GM12878 (cell line): ENCODE measurements at regions of chr6 and their contacts with region 1.

Region 1: DNA sequence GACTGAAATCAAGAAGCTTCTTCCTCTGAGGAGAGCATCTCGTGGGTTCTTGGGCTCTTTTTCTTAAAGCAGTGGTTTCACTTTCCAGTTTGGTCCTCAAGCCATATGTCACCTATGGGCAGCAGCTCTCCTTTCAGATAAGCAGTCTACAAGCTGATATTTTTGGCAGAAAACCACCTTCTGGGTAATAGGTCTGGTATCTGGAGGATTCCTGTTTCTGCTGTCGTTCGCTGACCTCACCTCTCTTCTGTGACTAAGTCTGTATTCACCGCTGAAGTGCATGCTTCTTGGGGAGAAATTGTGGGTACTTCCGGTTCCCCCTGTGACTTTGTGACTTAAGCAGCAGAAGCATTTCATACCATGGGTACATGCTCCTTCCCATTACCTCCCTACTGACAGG is 193.6 kb downstream of the EDN1 start:
- DNase-seq: peak; percentile 64
- ATAC-seq: peak; percentile 94
- H3K4me3 ChIP-seq: peak overlapping the region; percentile 27; the same call in 1 of the 2 replicates
- H3K27ac ChIP-seq: no peak overlapping the region
- H3K4me1 ChIP-seq: peaks cover 7% of the 10 kb centered on the region; the same call in 1 of the 2 replicates
- H3K27me3 ChIP-seq: no peaks in the 10 kb centered on the region
- CTCF ChIP-seq: no peak
- EP300 ChIP-seq: no peak
- POLR2A ChIP-seq: no peak
- RAD21 ChIP-seq: no peak

Region 2: GRCh38 chr6:12296255-12296573 is 187.5 kb before region 1 on chr6:
- CTCF ChIA-PET with region 1: interaction called, 54 read pairs
- POLR2A ChIA-PET with region 1: no interaction called
- RAD21 ChIA-PET with region 1: interaction called, 60 read pairs
- SMC1A ChIA-PET with region 1: interaction called, 57 read pairs
- in situ Hi-C with region 1: no loop called
- intact Hi-C with region 1: loop called (anchors 5 kb)
- DNase-seq: no peak
- ATAC-seq: no peak
- H3K4me3 ChIP-seq: no peak overlapping the region
- H3K27ac ChIP-seq: no peak overlapping the region
- H3K4me1 ChIP-seq: peaks cover 8% of the 10 kb centered on the region
- H3K27me3 ChIP-seq: no peaks in the 10 kb centered on the region
- CTCF ChIP-seq: no peak
- EP300 ChIP-seq: no peak
- POLR2A ChIP-seq: no peak
- RAD21 ChIP-seq: no peak

Region 3: GRCh38 chr6:12331956-12332749 is 151.6 kb before region 1 on chr6:
- CTCF ChIA-PET with region 1: interaction called, 25 read pairs
- POLR2A ChIA-PET with region 1: interaction called, 3 read pairs
- RAD21 ChIA-PET with region 1: interaction called, 23 read pairs
- SMC1A ChIA-PET with region 1: interaction called, 27 read pairs
- in situ Hi-C with region 1: no loop called
- intact Hi-C with region 1: no loop called
- DNase-seq: no peak
- ATAC-seq: no peak
- H3K4me3 ChIP-seq: no peak overlapping the region
- H3K27ac ChIP-seq: no peak overlapping the region
- H3K4me1 ChIP-seq: peaks cover 21% of the 10 kb centered on the region
- H3K27me3 ChIP-seq: no peaks in the 10 kb centered on the region
- CTCF ChIP-seq: no peak
- EP300 ChIP-seq: no peak
- POLR2A ChIP-seq: no peak
- RAD21 ChIP-seq: no peak

Region 4: GRCh38 chr6:12363651-12364381 is 119.9 kb before region 1 on chr6:
- CTCF ChIA-PET with region 1: interaction called, 40 read pairs
- POLR2A ChIA-PET with region 1: interaction called, 7 read pairs
- RAD21 ChIA-PET with region 1: interaction called, 47 read pairs
- SMC1A ChIA-PET with region 1: interaction called, 48 read pairs
- in situ Hi-C with region 1: no loop called
- intact Hi-C with region 1: loop called (anchors 5 kb)
- DNase-seq: peak; percentile 95
- ATAC-seq: peak; percentile 88
- H3K4me3 ChIP-seq: no peak overlapping the region
- H3K27ac ChIP-seq: peak overlapping the region; percentile 70
- H3K4me1 ChIP-seq: peaks cover 38% of the 10 kb centered on the region
- H3K27me3 ChIP-seq: no peaks in the 10 kb centered on the region
- CTCF ChIP-seq: no peak
- EP300 ChIP-seq: peak; percentile 84 to 93
- POLR2A ChIP-seq: no peak
- RAD21 ChIP-seq: 0 out of 2 replicates have a peak, but pooled peaks have one; percentile 6

Region 5: GRCh38 chr6:12383448-12383847 is 100.3 kb before region 1 on chr6:
- CTCF ChIA-PET with region 1: interaction called, 5 read pairs
- POLR2A ChIA-PET with region 1: interaction called, 5 read pairs
- RAD21 ChIA-PET with region 1: interaction called, 4 read pairs
- SMC1A ChIA-PET with region 1: interaction called, 22 read pairs
- in situ Hi-C with region 1: no loop called
- intact Hi-C with region 1: no loop called
- DNase-seq: peak; percentile 72
- ATAC-seq: peak; percentile 98
- H3K4me3 ChIP-seq: no peak overlapping the region
- H3K27ac ChIP-seq: no peak overlapping the region
- H3K4me1 ChIP-seq: peaks cover 11% of the 10 kb centered on the region
- H3K27me3 ChIP-seq: no peaks in the 10 kb centered on the region
- CTCF ChIP-seq: no peak
- EP300 ChIP-seq: peak; percentile 65 to 72; a peak in 2 of 4 replicates
- POLR2A ChIP-seq: no peak
- RAD21 ChIP-seq: no peak

Region 6: GRCh38 chr6:12467706-12468670 is 15.7 kb before region 1 on chr6:
- CTCF ChIA-PET with region 1: interaction called, 14 read pairs
- POLR2A ChIA-PET with region 1: interaction called, 6 read pairs
- RAD21 ChIA-PET with region 1: no interaction called
- SMC1A ChIA-PET with region 1: interaction called, 3 read pairs
- in situ Hi-C with region 1: no loop called
- intact Hi-C with region 1: no loop called
- DNase-seq: no peak
- ATAC-seq: no peak
- H3K4me3 ChIP-seq: no peak overlapping the region
- H3K27ac ChIP-seq: no peak overlapping the region
- H3K4me1 ChIP-seq: no peaks in the 10 kb centered on the region
- H3K27me3 ChIP-seq: no peaks in the 10 kb centered on the region; a peak in 1 of 4 replicates
- CTCF ChIP-seq: no peak
- EP300 ChIP-seq: no peak
- POLR2A ChIP-seq: no peak
- RAD21 ChIP-seq: no peak

Region 7: GRCh38 chr6:12595161-12595811 is 111.6 kb after region 1 on chr6:
- CTCF ChIA-PET with region 1: interaction called, 5 read pairs
- POLR2A ChIA-PET with region 1: no interaction called
- RAD21 ChIA-PET with region 1: interaction called, 8 read pairs
- SMC1A ChIA-PET with region 1: interaction called, 14 read pairs
- in situ Hi-C with region 1: no loop called
- intact Hi-C with region 1: no loop called
- DNase-seq: no peak
- ATAC-seq: peak; percentile 75
- H3K4me3 ChIP-seq: no peak overlapping the region
- H3K27ac ChIP-seq: no peak overlapping the region
- H3K4me1 ChIP-seq: peaks cover 14% of the 10 kb centered on the region
- H3K27me3 ChIP-seq: no peaks in the 10 kb centered on the region
- CTCF ChIP-seq: no peak
- EP300 ChIP-seq: no peak; a peak in 2 of 4 replicates
- POLR2A ChIP-seq: no peak
- RAD21 ChIP-seq: no peak